ENCODE measurements at regions of chr12 and their contacts with region 1.

Region 1: GRCh38 chr12:40144023-40144422 is 38.1 kb upstream of the SLC2A13 start:
- DNase-seq: no peak
- H3K4me3 ChIP-seq: no peak overlapping the region
- H3K27ac ChIP-seq: no peak overlapping the region
- H3K4me1 ChIP-seq: no peaks in the 10 kb centered on the region
- H3K27me3 ChIP-seq: no peaks in the 10 kb centered on the region
- CTCF ChIP-seq: no peak

Region 2: GRCh38 chr12:39788235-39788634 is 355.8 kb before region 1 on chr12:
- CTCF ChIA-PET with region 1: no interaction called
- POLR2A ChIA-PET with region 1: no interaction called
- intact Hi-C with region 1: no loop called
- DNase-seq: no peak
- H3K4me3 ChIP-seq: no peak overlapping the region
- H3K27ac ChIP-seq: no peak overlapping the region
- H3K4me1 ChIP-seq: no peaks in the 10 kb centered on the region
- H3K27me3 ChIP-seq: no peaks in the 10 kb centered on the region
- CTCF ChIP-seq: no peak

Region 3: DNA sequence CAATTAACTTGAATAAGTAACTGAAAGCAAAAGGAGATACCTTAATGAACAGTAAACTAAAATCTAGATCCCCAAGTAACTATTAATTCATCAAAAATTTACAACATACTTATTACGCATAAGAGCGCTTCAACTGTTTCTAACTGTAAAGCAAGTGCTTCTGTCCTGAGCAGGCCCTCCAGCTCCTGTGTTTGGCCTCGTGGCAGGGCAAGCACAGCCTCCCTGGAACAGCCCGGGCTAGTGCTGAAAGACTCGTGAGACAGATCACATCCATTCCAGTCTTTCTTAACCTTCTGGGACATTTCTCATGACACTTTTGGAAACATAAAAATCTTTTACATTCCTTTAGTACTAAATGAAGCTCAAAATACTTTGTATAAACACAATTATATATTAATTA is 345.6 kb before region 1 on chr12:
- CTCF ChIA-PET with region 1: no interaction called
- POLR2A ChIA-PET with region 1: interaction called, 24 read pairs
- intact Hi-C with region 1: no loop called
- DNase-seq: no peak
- H3K4me3 ChIP-seq: no peak overlapping the region
- H3K27ac ChIP-seq: no peak overlapping the region
- H3K4me1 ChIP-seq: no peaks in the 10 kb centered on the region
- H3K27me3 ChIP-seq: no peaks in the 10 kb centered on the region
- CTCF ChIP-seq: no peak

Region 4: GRCh38 chr12:40525054-40525453 is 381.0 kb after region 1 on chr12:
- CTCF ChIA-PET with region 1: no interaction called
- POLR2A ChIA-PET with region 1: no interaction called
- intact Hi-C with region 1: no loop called
- DNase-seq: no peak
- H3K4me3 ChIP-seq: no peak overlapping the region
- H3K27ac ChIP-seq: no peak overlapping the region
- H3K4me1 ChIP-seq: no peaks in the 10 kb centered on the region
- H3K27me3 ChIP-seq: no peaks in the 10 kb centered on the region
- CTCF ChIP-seq: no peak

Region 5: DNA sequence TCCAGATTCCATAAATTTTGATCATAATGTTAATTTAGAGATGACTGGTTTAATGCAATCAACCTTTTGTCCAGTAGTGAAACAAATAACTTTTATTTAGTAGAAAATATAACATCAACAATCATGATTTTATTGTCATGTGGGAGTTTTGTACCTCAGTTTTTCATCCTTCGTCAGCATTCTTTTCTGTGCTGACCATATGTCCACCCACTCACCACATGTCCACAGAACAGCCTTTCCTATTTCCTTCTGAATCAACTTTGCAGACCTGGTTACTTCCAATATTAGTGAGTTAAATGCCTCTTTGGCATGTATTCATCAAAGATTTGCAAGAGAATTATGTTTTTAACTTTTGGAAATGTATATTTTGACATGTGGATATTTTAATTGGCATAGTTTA is 511.4 kb after region 1 on chr12:
- CTCF ChIA-PET with region 1: no interaction called
- POLR2A ChIA-PET with region 1: no interaction called
- intact Hi-C with region 1: no loop called
- DNase-seq: no peak
- H3K4me3 ChIP-seq: no peak overlapping the region
- H3K27ac ChIP-seq: no peak overlapping the region
- H3K4me1 ChIP-seq: no peaks in the 10 kb centered on the region
- H3K27me3 ChIP-seq: no peaks in the 10 kb centered on the region
- CTCF ChIP-seq: no peak

Measured in PC-9 (cell line).